ENCODE measurements at regions of chr5 and their contacts with region 1.

Region 1: DNA sequence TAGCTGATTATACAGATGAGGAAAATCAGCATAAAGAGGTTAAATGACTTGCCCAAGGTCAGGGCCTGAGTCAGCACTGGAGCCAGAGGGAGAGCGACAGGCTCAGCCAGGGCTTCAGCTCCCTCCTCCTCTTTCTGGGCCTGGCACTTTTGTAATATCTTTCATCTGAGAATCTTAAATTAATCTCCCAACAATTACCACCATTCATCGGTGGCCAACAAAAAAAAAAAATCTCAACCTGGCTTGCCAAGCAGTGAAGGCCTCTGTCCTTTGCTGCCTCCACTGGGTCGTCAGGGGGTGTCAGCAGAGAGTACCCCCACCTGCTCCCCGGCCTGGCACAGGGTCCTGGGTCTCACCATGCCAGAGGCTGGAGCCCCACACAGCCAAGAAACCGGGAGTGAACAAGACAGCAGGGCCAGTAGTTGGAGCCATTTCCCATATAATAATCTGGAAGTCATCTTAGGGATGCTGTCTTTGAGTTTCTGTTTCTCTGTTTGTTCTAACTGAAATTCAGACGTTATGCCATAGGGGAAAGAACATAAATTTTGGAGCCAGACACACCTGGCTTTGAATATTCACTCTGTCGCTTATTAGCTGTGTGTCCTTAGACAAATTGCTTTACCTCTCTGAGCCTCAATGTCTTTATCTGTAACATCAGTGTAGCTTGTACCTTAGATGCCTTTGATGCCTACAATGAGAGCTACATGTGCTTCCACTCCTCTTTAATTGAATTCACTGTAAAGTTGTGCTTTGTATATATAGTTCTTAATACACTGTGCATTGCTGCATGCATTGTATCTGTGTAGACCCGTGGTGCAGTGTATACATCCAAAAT is 299.9 kb upstream of the MSX2 start:
- DNase-seq: no peak
- ATAC-seq: no peak
- H3K4me3 ChIP-seq: no peak overlapping the region
- H3K27ac ChIP-seq: no peak overlapping the region
- H3K4me1 ChIP-seq: no peaks in the 10 kb centered on the region
- H3K27me3 ChIP-seq: no peaks in the 10 kb centered on the region

Region 2: DNA sequence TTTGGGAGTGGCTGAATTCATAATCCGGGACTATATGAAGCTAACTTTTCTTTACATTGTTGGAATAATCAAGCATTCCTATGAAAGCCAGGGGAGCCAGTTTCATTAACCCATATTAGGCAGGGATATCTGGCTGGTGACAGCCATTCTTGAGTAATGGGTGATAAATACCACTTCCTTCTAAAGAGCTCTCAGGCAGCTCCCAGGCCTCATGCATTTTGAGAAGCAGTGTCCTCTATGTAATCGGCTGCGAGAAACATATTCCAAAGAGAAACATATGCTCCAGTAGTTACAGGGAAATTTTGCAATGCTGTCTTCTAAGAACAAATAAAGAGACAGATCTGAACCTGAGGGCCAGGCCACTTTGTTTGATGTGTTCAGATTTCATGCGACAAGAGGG is 383.0 kb after region 1 on chr5:
- intact Hi-C with region 1: no loop called
- DNase-seq: no peak
- ATAC-seq: no peak
- H3K4me3 ChIP-seq: no peak overlapping the region
- H3K27ac ChIP-seq: no peak overlapping the region
- H3K4me1 ChIP-seq: no peaks in the 10 kb centered on the region
- H3K27me3 ChIP-seq: no peaks in the 10 kb centered on the region

Region 3: DNA sequence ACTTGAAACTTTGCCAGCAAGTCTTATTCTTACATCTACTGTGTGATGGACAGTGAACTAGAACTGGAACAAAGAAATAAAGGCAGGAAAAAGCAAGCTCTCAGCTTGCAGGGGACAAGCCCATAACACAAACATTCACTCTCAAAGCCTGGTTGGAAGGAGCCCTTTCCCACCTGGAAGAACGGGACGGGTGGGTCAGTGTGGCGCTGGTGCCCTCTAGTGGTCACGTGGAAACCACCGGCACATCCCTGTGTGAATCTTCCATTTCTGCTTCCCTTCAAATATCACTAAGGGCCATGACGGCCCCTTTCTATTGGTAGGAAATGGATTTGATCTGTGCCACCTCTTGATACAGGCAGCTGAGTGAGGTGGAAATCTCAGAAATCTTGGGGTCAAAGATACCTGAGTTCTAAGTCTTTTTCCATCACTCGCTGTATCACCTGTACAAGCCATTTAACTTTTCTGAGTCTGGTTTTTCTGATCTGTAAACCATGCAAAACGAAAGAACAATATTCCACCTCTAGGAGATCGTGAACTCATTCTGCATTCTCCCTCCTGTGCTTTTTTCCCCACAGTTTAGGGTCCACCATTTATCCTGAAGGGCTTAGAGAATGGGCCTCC is 511.5 kb after region 1 on chr5:
- intact Hi-C with region 1: loop called (anchors 5 kb)
- DNase-seq: peak in 1 of 2 donors; percentile 58
- ATAC-seq: no peak
- H3K4me3 ChIP-seq: no peak overlapping the region
- H3K27ac ChIP-seq: no peak overlapping the region
- H3K4me1 ChIP-seq: no peaks in the 10 kb centered on the region
- H3K27me3 ChIP-seq: no peaks in the 10 kb centered on the region

Measured in aorta (tissue), 5 donors.